Heart left ventricle (tissue), 16 donors: ENCODE measurements at regions of chr17 and their contacts with region 1.

Region 1: GRCh38 chr17:82536512-82537201 is 17.1 kb downstream of the FOXK2 start:
- DNase-seq: peak in 4 of 5 donors; percentile 40 to 59 (median 48)
- ATAC-seq: peak; percentile 32 to 70 (median 54)
- H3K4me3 ChIP-seq: peak overlapping the region in 7 of 12 donors; percentile 1 to 29 (median 13)
- H3K27ac ChIP-seq: peak overlapping the region; percentile 43 to 90 (median 82)
- H3K4me1 ChIP-seq: peaks cover 4 to 80% (median 52%) of the 10 kb centered on the region in 12 donors
- H3K27me3 ChIP-seq: no peaks in the 10 kb centered on the region
- CTCF ChIP-seq: no peak
- POLR2A ChIP-seq: no peak

Region 2: DNA sequence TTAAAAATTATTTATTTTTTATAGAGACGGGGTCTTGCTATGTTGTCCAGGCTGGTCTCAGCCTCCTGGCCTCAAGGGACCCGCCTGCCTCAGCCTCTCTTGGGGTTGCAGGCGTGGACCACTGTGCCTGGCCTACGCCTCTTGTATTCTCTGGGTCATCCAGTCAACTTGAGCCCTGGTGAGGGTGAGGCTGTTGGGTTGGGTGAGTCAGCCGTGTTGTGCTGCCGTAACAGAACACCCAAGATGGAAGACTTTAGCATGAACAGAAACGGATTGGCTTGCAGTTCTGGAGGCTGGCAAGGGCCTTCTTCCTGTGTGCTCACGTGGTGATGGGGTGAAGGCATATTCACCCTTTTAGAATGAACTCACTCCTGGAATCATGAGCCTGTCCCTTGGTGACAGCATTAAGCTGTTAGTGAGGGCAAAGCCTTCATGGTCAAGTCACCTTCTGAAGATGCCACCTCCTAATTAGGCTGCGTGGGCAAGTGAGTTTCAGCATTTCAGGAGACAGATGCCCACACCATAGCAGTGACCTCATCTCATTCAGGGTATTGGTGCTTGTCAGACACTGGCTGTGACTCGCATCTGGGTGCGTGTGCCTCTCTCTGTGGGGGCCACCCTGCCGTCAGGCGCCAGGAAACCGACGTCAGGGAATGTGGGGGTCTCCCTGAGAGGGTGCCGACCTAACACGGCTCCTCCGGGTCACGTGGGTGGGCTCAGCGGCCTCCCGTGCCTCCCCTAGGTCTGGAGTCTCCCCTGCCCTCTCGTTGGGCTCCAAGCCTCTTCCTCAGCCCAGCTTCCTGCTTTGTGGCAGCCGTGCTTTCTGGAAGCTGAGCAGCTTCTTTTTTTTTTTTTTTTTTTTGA is 61.8 kb after region 1 on chr17:
- intact Hi-C with region 1: loop called in 1 of 10 experiments (anchors 2 kb)
- DNase-seq: peak in 1 of 5 donors; percentile 23
- ATAC-seq: no peak
- H3K4me3 ChIP-seq: no peak overlapping the region
- H3K27ac ChIP-seq: peak overlapping the region in 1 of 12 donors; percentile 54
- H3K4me1 ChIP-seq: peaks cover 3 to 49% (median 25%) of the 10 kb centered on the region in 12 donors
- H3K27me3 ChIP-seq: no peaks in the 10 kb centered on the region
- CTCF ChIP-seq: no peak
- POLR2A ChIP-seq: no peak